ENCODE measurements at regions of chr2 and their contacts with region 1.

Region 1: DNA sequence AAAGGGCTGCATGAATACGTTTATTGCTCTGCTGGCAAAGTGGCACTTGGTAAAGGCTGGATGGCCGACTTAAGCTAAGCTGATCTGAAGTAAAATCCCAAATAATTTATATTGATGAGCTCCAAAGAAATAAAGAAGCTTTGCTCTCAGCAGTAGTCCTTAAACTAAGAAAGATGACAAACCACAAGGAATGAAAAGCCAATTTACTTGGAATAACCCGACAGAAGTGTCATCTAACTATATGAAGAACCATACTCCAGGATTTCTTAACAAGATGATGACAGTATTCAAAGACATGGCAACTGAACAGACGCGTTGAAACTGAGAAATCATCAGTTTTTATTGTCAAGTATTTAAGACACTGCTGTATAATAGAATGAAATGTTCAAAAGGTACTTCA is 294.1 kb downstream of the PDE11A start:
- DNase-seq: no peak
- H3K4me3 ChIP-seq: no peak overlapping the region
- H3K27ac ChIP-seq: no peak overlapping the region
- H3K4me1 ChIP-seq: no peaks in the 10 kb centered on the region
- H3K27me3 ChIP-seq: no peaks in the 10 kb centered on the region
- CTCF ChIP-seq: no peak

Region 2: DNA sequence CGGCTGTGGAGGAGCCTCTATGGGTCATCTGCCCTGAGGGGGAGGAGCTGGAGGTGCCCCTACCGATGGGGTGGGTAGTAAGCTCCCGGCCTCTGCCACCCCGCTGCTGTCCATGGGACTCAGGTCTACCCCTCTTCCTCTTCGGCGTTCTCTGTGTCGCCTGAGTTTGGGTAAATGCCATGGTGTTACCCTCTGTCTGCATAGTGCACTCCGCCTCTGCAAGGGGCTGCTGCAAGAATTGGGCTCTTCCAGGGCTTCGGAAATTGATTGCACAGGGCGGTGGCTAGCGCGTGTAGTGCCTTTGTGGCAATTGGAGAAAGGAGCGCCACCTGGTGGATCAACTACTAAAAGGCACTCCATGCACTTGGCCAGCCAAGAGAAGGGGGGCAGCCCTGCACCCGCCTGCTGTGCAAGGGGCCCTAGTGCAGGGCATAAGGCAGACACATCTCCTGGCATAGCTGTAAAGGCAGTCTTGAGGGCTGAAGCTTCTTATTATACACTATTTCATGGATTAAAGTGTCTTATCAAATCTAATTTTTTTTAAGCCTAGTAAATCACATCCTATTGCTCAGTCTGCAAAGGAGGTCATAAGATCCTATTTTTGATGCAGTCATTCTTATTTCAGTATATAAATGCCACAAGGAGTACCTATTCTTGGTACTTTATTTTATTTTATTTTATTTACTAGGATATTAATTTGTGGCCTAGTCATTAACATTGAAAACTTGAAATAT is 14.8 kb before region 1 on chr2:
- CTCF ChIA-PET with region 1: no interaction called
- POLR2A ChIA-PET with region 1: no interaction called
- intact Hi-C with region 1: no loop called
- DNase-seq: peak in 1 of 2 experiments; percentile 70
- H3K4me3 ChIP-seq: no peak overlapping the region
- H3K27ac ChIP-seq: no peak overlapping the region
- H3K4me1 ChIP-seq: no peaks in the 10 kb centered on the region
- H3K27me3 ChIP-seq: no peaks in the 10 kb centered on the region
- CTCF ChIP-seq: peak; percentile 93

Region 3: GRCh38 chr2:178767094-178768060 is 988.9 kb after region 1 on chr2:
- CTCF ChIA-PET with region 1: no interaction called
- POLR2A ChIA-PET with region 1: no interaction called
- intact Hi-C with region 1: loop called (anchors 5 kb)
- DNase-seq: no peak
- H3K4me3 ChIP-seq: no peak overlapping the region
- H3K27ac ChIP-seq: no peak overlapping the region
- H3K4me1 ChIP-seq: peaks cover 11% of the 10 kb centered on the region
- H3K27me3 ChIP-seq: no peaks in the 10 kb centered on the region
- CTCF ChIP-seq: no peak